ENCODE measurements at regions of chr3 and their contacts with region 1.

Region 1: GRCh38 chr3:58640700-58641372 is 25.7 kb downstream of the FAM3D start:
- DNase-seq: peak; percentile 65
- H3K4me3 ChIP-seq: no peak overlapping the region
- H3K27ac ChIP-seq: no peak overlapping the region
- H3K4me1 ChIP-seq: peaks cover 7% of the 10 kb centered on the region
- H3K27me3 ChIP-seq: no peaks in the 10 kb centered on the region
- CTCF ChIP-seq: peak; percentile 83 to 92
- POLR2A ChIP-seq: no peak

Region 2: GRCh38 chr3:58560771-58561311 is 80.0 kb before region 1 on chr3:
- CTCF ChIA-PET with region 1: interaction called, 25 read pairs
- POLR2A ChIA-PET with region 1: no interaction called
- dilution Hi-C with region 1: no loop called
- intact Hi-C with region 1: no loop called
- DNase-seq: peak; percentile 91
- H3K4me3 ChIP-seq: no peak overlapping the region
- H3K27ac ChIP-seq: peak overlapping the region; percentile 45
- H3K4me1 ChIP-seq: peaks cover 35% of the 10 kb centered on the region
- H3K27me3 ChIP-seq: no peaks in the 10 kb centered on the region
- CTCF ChIP-seq: peak; percentile 58 to 71
- POLR2A ChIP-seq: peak; percentile 40

Region 3: DNA sequence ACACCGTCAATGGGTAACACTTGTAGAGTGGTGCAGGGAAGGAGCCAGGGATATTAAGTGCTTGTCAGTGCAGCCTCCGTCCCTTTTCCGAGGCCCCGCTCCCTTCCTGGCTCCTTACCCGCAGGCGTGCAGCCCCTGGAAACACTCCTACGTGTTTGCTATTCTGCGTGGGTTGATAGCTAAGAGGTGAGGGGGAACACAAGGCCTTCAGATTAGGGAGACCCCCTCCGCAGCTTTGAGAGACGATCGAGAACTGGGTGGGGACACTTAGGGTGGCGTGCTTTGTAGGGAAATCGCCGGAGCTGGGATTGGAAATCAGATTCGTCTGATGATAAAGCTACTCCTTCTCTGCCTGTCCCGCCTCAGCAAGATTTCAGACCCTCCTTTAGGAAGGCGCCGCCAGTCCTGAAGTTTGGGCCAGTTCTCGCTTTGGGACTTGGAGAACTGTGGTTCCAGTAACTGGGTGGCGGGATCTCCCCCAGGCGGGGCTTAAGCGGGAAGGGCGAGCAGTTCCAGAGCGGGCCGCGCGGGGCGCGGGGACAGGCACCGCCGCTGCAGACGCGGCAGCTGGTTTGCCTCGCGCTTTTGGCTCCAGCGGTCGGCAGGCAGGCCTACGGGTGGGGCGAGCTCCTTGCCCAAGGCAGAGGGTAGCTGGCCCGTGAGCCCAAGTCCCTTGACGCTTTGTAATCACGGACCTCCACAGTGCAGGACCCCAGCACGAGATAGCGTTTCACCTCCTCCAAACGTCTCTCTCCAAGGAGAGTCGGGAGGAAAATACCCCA is 55.6 kb before region 1 on chr3:
- CTCF ChIA-PET with region 1: interaction called, 10 read pairs
- POLR2A ChIA-PET with region 1: no interaction called
- dilution Hi-C with region 1: no loop called
- intact Hi-C with region 1: no loop called
- DNase-seq: peak; percentile 67
- H3K4me3 ChIP-seq: peak overlapping the region; percentile 40 to 65 (median 51)
- H3K27ac ChIP-seq: no peak overlapping the region
- H3K4me1 ChIP-seq: peaks cover 5% of the 10 kb centered on the region
- H3K27me3 ChIP-seq: peaks cover 20 to 26% of the 10 kb centered on the region in 2 experiments
- CTCF ChIP-seq: peak; percentile 74 to 87
- POLR2A ChIP-seq: no peak

Region 4: GRCh38 chr3:58608648-58609047 is 32.2 kb before region 1 on chr3:
- CTCF ChIA-PET with region 1: no interaction called
- POLR2A ChIA-PET with region 1: no interaction called
- dilution Hi-C with region 1: no loop called
- intact Hi-C with region 1: no loop called
- DNase-seq: no peak
- H3K4me3 ChIP-seq: no peak overlapping the region
- H3K27ac ChIP-seq: no peak overlapping the region
- H3K4me1 ChIP-seq: no peaks in the 10 kb centered on the region
- H3K27me3 ChIP-seq: peaks cover 8 to 12% of the 10 kb centered on the region in 2 experiments
- CTCF ChIP-seq: no peak
- POLR2A ChIP-seq: no peak

Region 5: DNA sequence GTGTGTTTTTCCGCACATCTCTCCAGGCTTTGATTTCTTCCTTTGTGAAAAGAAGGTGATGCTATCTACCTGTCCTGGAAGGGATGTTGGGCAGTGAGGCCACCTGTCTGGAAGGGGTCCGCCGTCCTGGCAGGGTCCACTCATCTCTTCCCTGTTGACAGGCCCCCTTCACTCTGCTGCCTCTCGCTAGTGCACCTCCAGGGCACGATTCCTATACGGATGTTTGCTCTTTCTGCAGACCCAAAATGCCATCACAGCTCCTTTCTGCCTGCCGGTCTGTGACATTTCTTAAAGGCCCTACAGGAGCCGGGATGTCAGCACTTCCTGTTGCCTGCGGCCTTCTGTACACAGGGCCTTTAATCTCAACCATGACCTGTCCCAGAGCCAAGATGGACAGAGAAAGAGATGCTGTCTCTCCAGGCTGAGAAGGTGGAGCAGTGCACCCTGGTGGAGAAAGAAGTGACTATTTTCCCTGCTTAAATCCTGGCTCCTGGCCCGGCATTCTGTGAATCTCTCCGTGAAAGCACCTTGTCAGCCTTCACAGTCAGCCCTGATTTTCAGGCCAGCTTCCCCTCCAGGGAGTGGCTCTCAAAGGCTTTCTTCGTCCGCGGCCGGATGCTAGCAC is 18.3 kb after region 1 on chr3:
- CTCF ChIA-PET with region 1: interaction called, 118 read pairs
- POLR2A ChIA-PET with region 1: no interaction called
- dilution Hi-C with region 1: no loop called
- intact Hi-C with region 1: loop called (anchors 1 kb)
- DNase-seq: peak; percentile 59
- H3K4me3 ChIP-seq: no peak overlapping the region
- H3K27ac ChIP-seq: no peak overlapping the region
- H3K4me1 ChIP-seq: peaks cover 2% of the 10 kb centered on the region
- H3K27me3 ChIP-seq: peaks cover 0 to 2% of the 10 kb centered on the region in 2 experiments
- CTCF ChIP-seq: peak; percentile 49 to 60
- POLR2A ChIP-seq: no peak

Region 6: DNA sequence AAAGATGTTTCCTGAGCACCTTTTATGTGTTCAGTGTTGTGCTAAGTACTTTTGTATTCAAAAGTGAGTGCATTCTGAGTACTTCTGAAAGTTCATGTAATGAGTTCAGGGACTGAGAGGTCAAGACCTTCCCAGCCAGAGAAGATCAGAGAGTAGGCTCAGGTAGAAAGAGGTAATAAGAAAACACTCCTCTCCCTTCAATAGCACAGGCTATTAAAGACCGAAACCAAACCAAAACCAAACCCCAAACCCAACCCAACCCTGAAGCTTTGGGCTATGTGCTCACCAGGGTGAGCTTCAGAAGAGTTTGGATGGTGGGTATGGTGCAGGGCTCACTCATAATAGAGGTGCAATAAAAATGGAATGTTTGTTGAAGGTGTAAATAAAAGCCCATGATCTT is 102.5 kb after region 1 on chr3:
- CTCF ChIA-PET with region 1: no interaction called
- POLR2A ChIA-PET with region 1: no interaction called
- dilution Hi-C with region 1: no loop called
- intact Hi-C with region 1: no loop called
- DNase-seq: no peak
- H3K4me3 ChIP-seq: no peak overlapping the region
- H3K27ac ChIP-seq: no peak overlapping the region
- H3K4me1 ChIP-seq: no peaks in the 10 kb centered on the region
- H3K27me3 ChIP-seq: peaks cover 0 to 5% of the 10 kb centered on the region in 2 experiments
- CTCF ChIP-seq: no peak
- POLR2A ChIP-seq: no peak

Region 7: DNA sequence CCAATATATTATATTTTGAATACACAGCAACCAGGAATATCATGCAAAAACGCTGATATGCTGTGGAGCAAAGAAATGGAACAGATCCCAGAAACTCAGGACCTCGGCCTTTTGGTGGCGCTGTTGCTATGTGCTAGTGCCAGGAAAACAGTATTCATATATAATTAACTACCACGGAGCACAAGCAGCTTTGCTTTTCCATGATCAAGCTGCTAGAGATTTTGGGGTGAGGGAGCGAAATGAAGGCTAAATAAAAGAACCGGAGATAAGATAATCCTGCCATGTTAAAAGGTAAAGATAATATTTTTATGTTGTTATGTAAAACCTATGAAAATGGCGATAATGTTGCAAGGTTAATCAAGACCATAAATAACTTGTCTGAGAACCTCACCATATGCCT is 183.4 kb after region 1 on chr3:
- CTCF ChIA-PET with region 1: interaction called, 19 read pairs
- POLR2A ChIA-PET with region 1: no interaction called
- dilution Hi-C with region 1: no loop called
- intact Hi-C with region 1: loop called (anchors 1 kb)
- DNase-seq: peak; percentile 78
- H3K4me3 ChIP-seq: no peak overlapping the region
- H3K27ac ChIP-seq: no peak overlapping the region
- H3K4me1 ChIP-seq: no peaks in the 10 kb centered on the region
- H3K27me3 ChIP-seq: no peaks in the 10 kb centered on the region
- CTCF ChIP-seq: peak; percentile 70 to 74
- POLR2A ChIP-seq: no peak

Region 8: DNA sequence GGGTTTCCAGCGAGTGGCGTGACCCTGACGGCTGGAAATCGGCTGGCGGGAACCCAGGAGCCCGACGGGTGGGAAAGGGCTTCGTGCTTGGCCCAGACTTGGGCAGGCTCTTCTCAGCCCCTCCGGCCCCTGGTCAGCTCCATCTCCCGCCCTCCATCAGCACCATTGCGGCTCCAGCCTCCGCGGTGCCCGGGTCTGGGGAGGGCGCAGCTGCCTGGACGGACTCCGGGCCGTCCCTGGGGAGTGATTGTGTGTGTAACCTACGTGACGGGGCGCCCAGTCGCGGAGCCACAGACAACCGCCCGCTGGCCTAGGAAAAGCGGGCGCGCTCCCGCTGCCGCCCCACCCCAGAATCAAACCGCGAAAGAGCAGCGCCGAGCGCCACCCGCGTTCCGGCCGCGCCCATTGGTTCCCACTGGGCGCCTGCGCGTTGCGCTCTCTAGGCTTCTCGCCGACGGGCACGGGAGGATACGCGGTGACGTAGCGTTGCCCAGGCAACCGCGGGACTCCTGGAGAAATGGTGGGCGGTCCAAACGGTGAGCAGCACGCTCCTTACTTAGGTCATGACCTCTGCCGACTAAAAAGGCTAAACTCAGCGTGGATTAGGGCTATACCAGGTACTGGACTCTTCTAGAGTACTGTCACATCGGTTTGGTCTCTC is 409.0 kb after region 1 on chr3 and contains the start of gene CFAP20DC:
- CTCF ChIA-PET with region 1: interaction called, 97 read pairs
- POLR2A ChIA-PET with region 1: no interaction called
- dilution Hi-C with region 1: no loop called
- intact Hi-C with region 1: loop called (anchors 1 kb)
- DNase-seq: peak; percentile 92
- H3K4me3 ChIP-seq: peak within 1 kb of the TSS; percentile 34 to 53 (median 51)
- H3K27ac ChIP-seq: peak within 1 kb of the TSS; percentile 37
- H3K4me1 ChIP-seq: peaks cover 6% of the 10 kb centered on the region
- H3K27me3 ChIP-seq: no peaks in the 10 kb centered on the region
- CTCF ChIP-seq: no peak
- POLR2A ChIP-seq: peak; percentile 93
- total RNA-seq, gene CFAP20DC: 1.9 and 2.1 TPM in 2 replicates

Region 9: DNA sequence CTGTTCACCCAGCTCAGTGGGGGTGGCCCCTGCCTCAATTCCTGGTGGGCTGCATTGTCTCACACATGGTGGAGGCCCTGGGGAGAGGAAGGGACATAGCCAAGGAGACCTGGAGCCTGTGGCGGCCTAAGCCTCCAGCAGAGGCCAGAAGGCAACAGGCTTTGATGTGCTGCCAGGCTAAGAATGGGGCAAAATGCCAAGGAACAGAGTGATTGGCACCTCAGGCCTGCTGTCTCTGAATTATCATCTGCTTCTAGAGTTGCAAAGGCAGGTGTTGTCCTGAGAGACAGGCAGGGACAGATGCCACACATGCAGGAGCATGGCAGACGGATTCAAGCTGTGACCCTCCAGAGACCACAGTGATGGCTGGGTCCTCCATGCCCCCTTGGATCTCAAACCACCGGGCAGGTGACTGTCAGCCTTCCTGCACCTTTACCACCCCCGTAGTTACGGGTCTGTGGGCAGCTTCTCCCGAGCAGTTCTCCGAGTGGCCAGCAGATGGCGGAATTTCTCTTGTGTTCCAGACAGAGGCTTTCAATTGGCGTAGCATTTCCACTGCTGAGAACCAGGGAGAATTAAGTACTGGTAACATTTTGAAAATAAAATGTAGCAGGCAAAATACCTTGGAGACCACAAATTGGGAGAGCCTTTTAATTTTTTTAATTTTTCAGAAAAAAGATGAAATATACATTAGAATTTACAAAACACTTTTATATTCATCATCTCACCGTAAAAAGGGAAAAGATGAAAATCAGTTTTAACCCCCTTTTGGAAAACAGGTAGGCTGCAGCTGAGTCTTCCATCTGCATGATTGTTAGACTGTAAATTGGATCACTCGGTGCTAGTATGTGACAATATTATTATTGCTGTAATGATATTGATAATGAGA is 934.5 kb after region 1 on chr3:
- CTCF ChIA-PET with region 1: interaction called, 20 read pairs
- POLR2A ChIA-PET with region 1: no interaction called
- dilution Hi-C with region 1: no loop called
- intact Hi-C with region 1: no loop called
- DNase-seq: peak; percentile 41
- H3K4me3 ChIP-seq: no peak overlapping the region
- H3K27ac ChIP-seq: no peak overlapping the region
- H3K4me1 ChIP-seq: no peaks in the 10 kb centered on the region
- H3K27me3 ChIP-seq: no peaks in the 10 kb centered on the region
- CTCF ChIP-seq: peak; percentile 84
- POLR2A ChIP-seq: no peak